Cardiac septum (tissue), 1 donor: ENCODE measurements at regions of chr1 and their contacts with region 1.

Region 1: GRCh38 chr1:197924516-197925123 is 7.4 kb downstream of the LHX9 start:
- DNase-seq: no peak

Region 2: GRCh38 chr1:197521118-197521739 is 403.4 kb before region 1 on chr1:
- intact Hi-C with region 1: loop called (anchors 5 kb)
- DNase-seq: no peak

Region 3: GRCh38 chr1:197614916-197615692 is 309.5 kb before region 1 on chr1:
- intact Hi-C with region 1: loop called (anchors 5 kb)
- DNase-seq: no peak

Region 4: DNA sequence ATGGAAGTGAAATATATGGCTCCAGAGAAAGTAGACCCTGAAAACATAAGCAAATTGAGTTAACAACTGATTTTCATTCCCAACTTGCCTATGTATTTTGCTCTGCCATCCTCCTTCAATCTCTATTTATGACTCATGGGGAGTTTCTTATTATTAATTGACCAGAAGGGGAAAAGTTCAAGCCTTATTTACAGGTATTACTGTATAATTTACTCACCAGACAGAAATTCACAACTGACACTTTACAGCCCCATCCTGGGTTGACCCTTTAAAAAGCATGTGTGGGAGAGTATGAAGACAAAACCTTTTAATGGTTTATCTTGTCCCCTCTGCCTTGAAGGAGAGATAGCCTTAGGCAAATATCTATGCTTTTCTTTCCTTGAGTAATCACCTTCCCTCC is 61.9 kb before region 1 on chr1:
- intact Hi-C with region 1: no loop called
- DNase-seq: no peak